ENCODE measurements at regions of chr1 and their contacts with region 1.

Region 1: DNA sequence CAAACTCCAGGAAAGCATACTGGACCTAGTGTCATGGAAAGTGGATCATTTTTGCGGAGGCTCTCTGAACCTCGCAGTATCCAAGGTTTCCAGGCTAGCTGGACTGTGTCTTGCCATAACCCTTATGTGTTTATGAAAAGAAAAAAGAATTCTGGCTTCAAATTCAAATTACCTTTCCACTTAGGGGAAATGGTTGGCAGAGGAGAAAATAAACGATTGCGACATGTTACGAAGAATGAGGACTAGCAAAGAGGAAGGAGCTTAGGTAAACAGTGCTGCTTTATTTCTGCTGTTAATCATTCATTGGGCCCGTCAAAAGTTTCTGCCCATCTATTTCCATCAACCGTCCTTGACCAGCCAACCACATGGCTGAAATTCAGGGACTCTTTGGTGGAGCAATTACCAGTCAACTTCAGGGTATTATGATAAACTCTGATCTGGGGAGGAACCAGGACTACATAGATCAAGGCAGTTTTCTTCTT is at the start of gene C4BPA:
- DNase-seq: no peak
- H3K4me3 ChIP-seq: no peak within 1 kb of the TSS
- H3K27ac ChIP-seq: no peak within 1 kb of the TSS
- H3K4me1 ChIP-seq: 0 out of 2 replicates have a peak, but pooled peaks cover 10% of the 10 kb centered on the region
- H3K27me3 ChIP-seq: no peaks in the 10 kb centered on the region
- CTCF ChIP-seq: no peak
- total RNA-seq, gene C4BPA: not detected in 2 replicates

Region 2: GRCh38 chr1:207164086-207164485 is 60.2 kb after region 1 on chr1:
- CTCF ChIA-PET with region 1: no interaction called
- POLR2A ChIA-PET with region 1: no interaction called
- intact Hi-C with region 1: loop called (anchors 10 kb)
- DNase-seq: no peak
- H3K4me3 ChIP-seq: no peak overlapping the region
- H3K27ac ChIP-seq: no peak overlapping the region
- H3K4me1 ChIP-seq: no peaks in the 10 kb centered on the region
- H3K27me3 ChIP-seq: no peaks in the 10 kb centered on the region
- CTCF ChIP-seq: no peak